HEK293T (cell line): ENCODE measurements at regions of chr11 and their contacts with region 1.

Region 1: DNA sequence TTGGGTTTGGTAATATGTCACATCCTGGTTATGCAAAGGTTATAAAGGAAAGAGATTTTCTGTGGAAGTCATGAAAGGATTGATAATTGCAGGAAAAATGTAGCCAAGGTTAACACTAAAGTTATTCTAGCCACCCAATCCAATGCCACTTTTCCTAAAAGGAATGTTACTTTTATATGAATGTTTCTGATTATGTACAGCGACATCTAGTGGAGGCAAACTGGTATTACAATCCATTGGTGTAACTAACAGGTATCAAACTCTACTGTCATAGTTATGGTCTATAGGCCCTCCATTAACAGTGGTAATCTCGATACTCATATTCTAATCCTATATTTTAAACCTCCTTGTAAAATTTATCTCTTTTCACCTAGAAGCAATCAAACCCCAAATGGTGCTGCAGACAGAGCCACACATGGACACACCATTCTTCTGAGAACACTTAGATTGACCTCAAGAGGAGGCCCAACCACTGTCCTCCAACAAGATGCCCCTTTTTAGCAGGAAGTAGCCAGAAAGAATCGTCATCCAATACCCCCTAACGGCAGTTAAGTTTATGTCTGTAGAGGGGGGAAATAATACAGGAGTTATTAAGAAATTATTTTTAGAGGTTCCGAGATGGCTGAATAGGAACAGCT is 74.9 kb upstream of the RAG2 start:
- DNase-seq: peak; percentile 11

Region 2: GRCh38 chr11:36564376-36565030 is 108.4 kb before region 1 on chr11:
- CTCF ChIA-PET with region 1: interaction called, 15 read pairs
- POLR2A ChIA-PET with region 1: no interaction called
- DNase-seq: peak; percentile 50

Region 3: DNA sequence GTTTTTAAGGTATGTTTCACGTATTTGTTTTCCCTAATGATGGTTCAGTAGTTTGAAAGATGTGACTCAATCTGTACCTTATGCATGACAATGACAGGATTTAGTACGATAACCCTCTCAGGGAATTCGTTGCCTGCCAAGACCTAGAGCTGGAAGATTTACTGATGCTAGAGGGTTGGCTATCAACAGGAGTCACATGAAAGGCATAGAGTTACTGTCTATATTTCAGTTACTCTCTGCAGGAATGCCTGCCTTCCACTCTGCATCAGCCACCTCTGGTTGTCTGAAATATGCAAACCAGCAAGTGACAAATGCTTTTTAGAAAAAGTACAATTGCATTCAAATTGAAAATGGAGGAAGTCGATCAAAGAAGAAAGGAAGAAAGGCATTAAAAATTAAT is 201.4 kb after region 1 on chr11:
- CTCF ChIA-PET with region 1: no interaction called
- POLR2A ChIA-PET with region 1: no interaction called
- DNase-seq: no peak